ENCODE measurements at regions of chr17 and their contacts with region 1.

Region 1: GRCh38 chr17:78965491-78965948 is 14.2 kb downstream of the LGALS3BP start:
- DNase-seq: no peak
- H3K4me3 ChIP-seq: no peak overlapping the region
- H3K4me3 Mint-ChIP-seq: peak overlapping the region in 1 of 2 donors; percentile 37
- H3K27ac ChIP-seq: no peak overlapping the region
- H3K27ac Mint-ChIP-seq: no peak overlapping the region
- H3K4me1 ChIP-seq: no peaks in the 10 kb centered on the region
- H3K4me1 Mint-ChIP-seq: peaks cover 8% of the 10 kb centered on the region
- H3K27me3 ChIP-seq: no peaks in the 10 kb centered on the region
- H3K27me3 Mint-ChIP-seq: peaks cover 0 to 4% (median 2%) of the 10 kb centered on the region in 3 donors
- CTCF ChIP-seq: no peak

Region 2: DNA sequence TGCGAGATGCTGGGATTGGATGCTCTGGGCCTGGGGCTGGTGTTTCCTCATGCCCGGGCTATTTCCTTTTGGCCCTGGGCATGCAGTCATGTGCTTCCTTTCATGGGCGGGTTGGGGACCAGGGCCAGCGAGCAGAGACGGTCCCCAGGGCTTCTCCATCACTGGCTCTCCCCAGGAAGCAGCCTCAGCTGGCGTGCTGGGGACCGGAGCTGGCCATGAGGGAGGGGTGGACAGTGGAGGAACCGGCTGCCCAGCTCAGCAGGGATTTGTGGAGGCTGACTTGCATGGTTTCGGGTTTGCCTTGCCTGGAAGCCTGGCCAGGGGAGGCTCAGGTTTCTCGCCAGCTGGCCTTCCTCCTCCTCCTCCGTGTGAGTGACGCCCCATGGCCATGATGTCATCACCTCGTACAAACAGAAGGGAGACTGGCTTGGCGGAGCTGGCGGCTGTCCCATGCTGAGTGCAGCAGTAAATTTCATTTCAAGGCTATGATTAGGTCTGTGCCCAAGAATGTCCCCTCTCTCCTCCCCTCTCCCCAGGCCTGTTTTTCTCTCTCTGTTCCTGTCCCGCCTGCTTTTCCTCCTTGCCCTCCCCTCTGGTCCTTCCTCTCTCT is 31.5 kb before region 1 on chr17:
- intact Hi-C with region 1: loop called (anchors 5 kb)
- DNase-seq: peak; percentile 56 to 71 (median 62)
- H3K4me3 ChIP-seq: peak overlapping the region in 1 of 3 experiments; percentile 32
- H3K4me3 Mint-ChIP-seq: peak overlapping the region; percentile 7 to 54
- H3K27ac ChIP-seq: peak overlapping the region; percentile 48 to 59
- H3K27ac Mint-ChIP-seq: peak overlapping the region; percentile 76 to 95 (median 90)
- H3K4me1 ChIP-seq: peaks cover 18 to 21% of the 10 kb centered on the region in 2 donors
- H3K4me1 Mint-ChIP-seq: peaks cover 22% of the 10 kb centered on the region
- H3K27me3 ChIP-seq: no peaks in the 10 kb centered on the region
- H3K27me3 Mint-ChIP-seq: peaks cover 6 to 10% (median 7%) of the 10 kb centered on the region in 3 donors
- CTCF ChIP-seq: no peak

Region 3: DNA sequence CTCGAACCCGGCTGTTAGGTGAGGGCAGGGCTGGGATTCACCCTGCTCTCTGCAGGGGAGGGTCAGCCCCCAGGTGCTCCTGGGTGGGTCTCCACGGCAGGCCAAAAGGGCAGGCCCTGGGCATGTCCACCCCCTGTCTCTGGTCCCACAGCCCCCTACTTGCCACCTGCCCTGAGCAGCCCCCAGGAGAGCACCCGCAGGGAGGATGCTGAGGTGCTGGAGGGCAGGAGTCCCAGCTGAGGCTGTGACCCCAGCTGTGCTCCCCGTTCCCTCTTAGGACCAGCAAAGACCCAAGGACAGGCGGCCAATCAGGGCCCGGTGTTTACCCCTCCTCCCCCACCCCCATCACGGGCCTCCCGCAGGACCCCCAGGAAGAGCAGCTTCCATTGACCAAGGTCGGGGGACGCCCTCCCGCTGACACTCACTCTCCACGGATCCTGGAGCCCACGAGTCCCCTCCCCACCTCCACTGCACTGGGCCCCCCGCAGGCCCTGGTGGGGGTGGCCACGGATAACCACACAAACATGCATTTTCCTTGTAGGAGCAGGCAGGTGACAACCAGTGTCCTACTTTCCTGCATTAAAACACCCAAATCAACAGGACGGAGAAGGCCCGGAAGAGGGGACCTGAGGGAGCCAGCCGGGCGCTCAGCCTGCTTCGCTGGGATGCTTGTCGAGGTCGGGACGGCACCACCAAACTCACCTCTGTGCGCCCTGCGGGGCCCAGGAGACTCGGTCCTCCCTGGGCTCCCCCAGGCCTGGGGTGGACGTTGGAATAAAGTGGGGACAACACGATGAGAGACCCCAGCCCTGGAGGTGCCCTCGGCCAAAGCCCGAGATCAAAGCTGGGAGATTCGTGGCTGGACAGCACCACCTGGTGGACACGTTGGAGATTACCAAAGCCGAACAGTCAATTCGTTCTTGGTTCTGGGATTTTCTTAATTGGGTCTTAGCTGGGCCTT is 742.7 kb after region 1 on chr17:
- intact Hi-C with region 1: no loop called
- DNase-seq: peak; percentile 20 to 44 (median 41)
- H3K4me3 ChIP-seq: peak overlapping the region in 1 of 3 experiments; percentile 38
- H3K4me3 Mint-ChIP-seq: peak overlapping the region; percentile 50 to 75
- H3K27ac ChIP-seq: no peak overlapping the region
- H3K27ac Mint-ChIP-seq: no peak overlapping the region
- H3K4me1 ChIP-seq: no peaks in the 10 kb centered on the region
- H3K4me1 Mint-ChIP-seq: peaks cover 6% of the 10 kb centered on the region
- H3K27me3 ChIP-seq: no peaks in the 10 kb centered on the region
- H3K27me3 Mint-ChIP-seq: peaks cover 4 to 21% (median 14%) of the 10 kb centered on the region in 3 donors
- CTCF ChIP-seq: peak; percentile 85